ENCODE measurements at regions of chr10 and their contacts with region 1.

Region 1: DNA sequence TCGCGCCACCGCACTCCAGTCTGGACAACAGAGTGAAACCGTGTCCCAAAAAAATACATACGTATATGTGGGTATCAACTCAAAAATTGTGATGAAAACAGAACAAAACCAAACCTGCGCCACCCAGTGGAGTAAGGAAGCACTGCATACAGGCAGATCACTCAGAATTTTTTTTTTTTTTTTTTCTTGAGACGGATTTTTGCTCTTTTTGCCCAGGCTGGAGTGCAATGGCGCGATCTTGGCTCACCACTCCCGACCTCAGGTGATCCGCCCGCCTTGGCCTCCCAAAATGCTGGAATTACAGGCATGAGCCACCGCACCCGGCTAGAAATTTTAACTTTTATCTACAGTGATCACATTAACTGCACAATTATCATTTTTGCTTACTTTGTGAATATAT is 9.1 kb upstream of the TMEM236 start:
- DNase-seq: peak; percentile 91
- H3K4me3 ChIP-seq: peak overlapping the region in 2 of 4 donors; percentile 8 to 15
- H3K27ac ChIP-seq: no peak overlapping the region
- H3K4me1 ChIP-seq: peaks cover 5 to 7% (median 7%) of the 10 kb centered on the region in 4 donors
- H3K27me3 ChIP-seq: no peaks in the 10 kb centered on the region
- CTCF ChIP-seq: peak; percentile 77 to 98 (median 92)
- EP300 ChIP-seq: no peak
- POLR2A ChIP-seq: no peak

Region 2: GRCh38 chr10:17607603-17608332 is 135.2 kb before region 1 on chr10:
- intact Hi-C with region 1: loop called (anchors 2 kb)
- DNase-seq: no peak
- H3K4me3 ChIP-seq: no peak overlapping the region
- H3K27ac ChIP-seq: no peak overlapping the region
- H3K4me1 ChIP-seq: peaks cover 6 to 21% (median 19%) of the 10 kb centered on the region in 4 donors
- H3K27me3 ChIP-seq: no peaks in the 10 kb centered on the region
- CTCF ChIP-seq: peak; percentile 75 to 89 (median 84)
- EP300 ChIP-seq: no peak
- POLR2A ChIP-seq: no peak

Region 3: GRCh38 chr10:18097524-18097923 is 354.6 kb after region 1 on chr10:
- intact Hi-C with region 1: no loop called
- DNase-seq: peak; percentile 24
- H3K4me3 ChIP-seq: no peak overlapping the region
- H3K27ac ChIP-seq: no peak overlapping the region
- H3K4me1 ChIP-seq: no peaks in the 10 kb centered on the region
- H3K27me3 ChIP-seq: no peaks in the 10 kb centered on the region
- CTCF ChIP-seq: no peak
- EP300 ChIP-seq: no peak
- POLR2A ChIP-seq: no peak

Region 4: GRCh38 chr10:18238870-18239485 is 496.1 kb after region 1 on chr10:
- intact Hi-C with region 1: loop called (anchors 10 kb)
- DNase-seq: peak; percentile 45
- H3K4me3 ChIP-seq: no peak overlapping the region
- H3K27ac ChIP-seq: peak overlapping the region; percentile 70 to 85 (median 76)
- H3K4me1 ChIP-seq: peaks cover 10 to 60% (median 58%) of the 10 kb centered on the region in 4 donors
- H3K27me3 ChIP-seq: no peaks in the 10 kb centered on the region
- CTCF ChIP-seq: peak; percentile 64 to 71 (median 71)
- EP300 ChIP-seq: no peak
- POLR2A ChIP-seq: no peak

Measured in esophagus muscularis mucosa (tissue), 4 donors.